MCF 10A (cell line): ENCODE measurements at regions of chr15 and their contacts with region 1.

Region 1: GRCh38 chr15:63157118-63157843 is at the start of gene RPS27L:
- DNase-seq: peak; percentile 91
- H3K4me3 Mint-ChIP-seq: peak within 1 kb of the TSS; percentile 92
- H3K27ac Mint-ChIP-seq: peak within 1 kb of the TSS; percentile 98
- H3K4me1 Mint-ChIP-seq: no peaks in the 10 kb centered on the region
- H3K27me3 Mint-ChIP-seq: no peaks in the 10 kb centered on the region
- CTCF ChIP-seq: no peak
- total RNA-seq, gene RPS27L: 154 and 172 TPM in 2 replicates

Region 2: GRCh38 chr15:63079938-63080626 is 77.2 kb before region 1 on chr15:
- CTCF ChIA-PET with region 1: no interaction called
- POLR2A ChIA-PET with region 1: no interaction called
- intact Hi-C with region 1: no loop called
- DNase-seq: peak; percentile 26
- H3K4me3 Mint-ChIP-seq: no peak overlapping the region
- H3K27ac Mint-ChIP-seq: no peak overlapping the region
- H3K4me1 Mint-ChIP-seq: peaks cover 7% of the 10 kb centered on the region
- H3K27me3 Mint-ChIP-seq: no peaks in the 10 kb centered on the region
- CTCF ChIP-seq: no peak

Region 3: GRCh38 chr15:63135804-63136203 is 21.5 kb before region 1 on chr15:
- CTCF ChIA-PET with region 1: no interaction called
- POLR2A ChIA-PET with region 1: interaction called, 100 read pairs
- intact Hi-C with region 1: no loop called
- DNase-seq: peak; percentile 79
- H3K4me3 Mint-ChIP-seq: no peak overlapping the region
- H3K27ac Mint-ChIP-seq: peak overlapping the region; percentile 91
- H3K4me1 Mint-ChIP-seq: peaks cover 20% of the 10 kb centered on the region
- H3K27me3 Mint-ChIP-seq: no peaks in the 10 kb centered on the region
- CTCF ChIP-seq: no peak

Region 4: DNA sequence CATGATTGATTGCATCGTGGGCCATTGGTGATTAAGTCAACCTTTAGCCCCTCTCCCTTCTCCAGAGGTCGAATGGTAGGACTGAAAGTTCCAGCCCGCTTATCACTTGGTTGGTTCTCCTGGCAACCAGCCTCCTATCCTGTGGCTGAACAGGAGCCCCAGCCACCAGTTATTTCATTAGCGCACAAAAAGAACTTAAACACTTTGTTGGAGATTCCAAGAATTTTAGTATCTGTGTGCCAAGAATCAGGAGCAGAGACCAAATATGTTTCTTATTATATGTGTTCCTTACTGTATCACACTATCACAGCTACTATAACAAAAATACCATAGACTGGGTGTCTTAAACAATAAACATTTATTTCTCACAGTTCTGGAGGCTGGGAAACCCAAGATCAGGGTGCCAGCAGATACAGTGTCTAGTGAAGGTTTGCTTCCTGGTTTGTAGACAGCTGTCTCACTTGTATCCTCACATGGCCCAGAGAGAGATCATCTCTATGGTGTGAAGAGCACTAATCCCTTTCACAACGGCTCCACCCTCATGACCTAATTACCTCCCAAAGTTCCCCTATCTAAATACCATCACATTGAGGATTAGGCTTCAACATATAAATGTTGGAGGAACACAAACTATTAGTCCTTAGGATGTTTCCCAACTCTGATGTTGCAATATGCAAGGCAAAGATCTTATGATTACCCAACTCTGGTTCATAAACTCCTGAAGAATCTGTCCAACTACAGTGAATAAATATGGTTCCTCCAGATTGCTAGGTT is 89.6 kb after region 1 on chr15:
- CTCF ChIA-PET with region 1: no interaction called
- POLR2A ChIA-PET with region 1: interaction called, 17 read pairs
- intact Hi-C with region 1: no loop called
- DNase-seq: peak; percentile 93
- H3K4me3 Mint-ChIP-seq: peak overlapping the region; percentile 10
- H3K27ac Mint-ChIP-seq: peak overlapping the region; percentile 82
- H3K4me1 Mint-ChIP-seq: peaks cover 32% of the 10 kb centered on the region
- H3K27me3 Mint-ChIP-seq: no peaks in the 10 kb centered on the region
- CTCF ChIP-seq: no peak

Region 5: DNA sequence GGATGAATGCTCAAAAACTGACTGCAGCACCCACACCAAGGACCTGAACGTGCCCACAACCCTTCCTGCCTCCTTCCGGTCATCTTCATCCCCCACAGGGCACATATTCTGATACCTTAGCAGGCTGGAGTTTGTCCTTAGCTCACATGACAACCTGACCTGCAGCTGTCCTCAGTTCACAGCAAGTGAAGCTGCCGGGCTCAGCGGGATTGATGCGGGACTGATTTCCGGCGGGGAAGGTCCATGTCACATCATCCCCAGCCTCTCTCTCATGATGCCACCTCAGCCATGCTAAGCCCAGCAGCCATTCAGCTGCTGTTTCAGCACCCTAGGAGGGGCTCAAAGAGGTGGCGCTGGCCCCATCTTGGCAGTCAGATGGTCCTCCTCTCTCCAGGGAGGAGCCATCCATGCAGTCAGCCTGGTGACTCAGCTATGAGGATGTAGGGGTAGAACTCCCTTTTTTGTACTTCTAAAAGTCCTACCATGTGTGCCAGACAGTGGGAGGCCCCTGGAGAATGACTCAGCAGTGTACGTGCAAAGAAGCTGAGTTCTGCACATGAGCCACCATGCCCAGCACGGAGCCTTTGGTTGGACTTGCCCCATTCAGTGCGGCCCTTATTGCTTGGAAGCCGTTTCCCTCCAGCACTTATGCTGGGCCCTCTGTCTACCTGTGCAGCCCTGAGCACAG is 214.9 kb after region 1 on chr15:
- CTCF ChIA-PET with region 1: no interaction called
- POLR2A ChIA-PET with region 1: interaction called, 10 read pairs
- intact Hi-C with region 1: no loop called
- DNase-seq: peak; percentile 96
- H3K4me3 Mint-ChIP-seq: peak overlapping the region; percentile 65
- H3K27ac Mint-ChIP-seq: peak overlapping the region; percentile 95
- H3K4me1 Mint-ChIP-seq: peaks cover 54% of the 10 kb centered on the region
- H3K27me3 Mint-ChIP-seq: no peaks in the 10 kb centered on the region
- CTCF ChIP-seq: no peak

Region 6: GRCh38 chr15:63553388-63553791 is 396.1 kb after region 1 on chr15:
- CTCF ChIA-PET with region 1: no interaction called
- POLR2A ChIA-PET with region 1: no interaction called
- intact Hi-C with region 1: no loop called
- DNase-seq: peak; percentile 62
- H3K4me3 Mint-ChIP-seq: peak overlapping the region; percentile 30
- H3K27ac Mint-ChIP-seq: peak overlapping the region; percentile 6
- H3K4me1 Mint-ChIP-seq: peaks cover 22% of the 10 kb centered on the region
- H3K27me3 Mint-ChIP-seq: no peaks in the 10 kb centered on the region
- CTCF ChIP-seq: no peak